CD8-positive, alpha-beta T cell (primary cell): ENCODE measurements at regions of chr5 and their contacts with region 1.

Region 1: GRCh38 chr5:141564216-141564692 is 54.5 kb downstream of the DIAPH1 start:
- DNase-seq: peak; percentile 17 to 95 (median 63)
- ATAC-seq: peak; percentile 98
- H3K4me3 ChIP-seq: no peak overlapping the region
- H3K4me3 Mint-ChIP-seq: no peak overlapping the region
- H3K27ac ChIP-seq: peak overlapping the region in 1 of 2 experiments; percentile 76
- H3K27ac Mint-ChIP-seq: peak overlapping the region; percentile 78
- H3K4me1 ChIP-seq: no peaks in the 10 kb centered on the region
- H3K4me1 Mint-ChIP-seq: peaks cover 33% of the 10 kb centered on the region
- H3K27me3 ChIP-seq: no peaks in the 10 kb centered on the region
- H3K27me3 Mint-ChIP-seq: no peaks in the 10 kb centered on the region
- CTCF ChIP-seq: peak; percentile 92

Region 2: DNA sequence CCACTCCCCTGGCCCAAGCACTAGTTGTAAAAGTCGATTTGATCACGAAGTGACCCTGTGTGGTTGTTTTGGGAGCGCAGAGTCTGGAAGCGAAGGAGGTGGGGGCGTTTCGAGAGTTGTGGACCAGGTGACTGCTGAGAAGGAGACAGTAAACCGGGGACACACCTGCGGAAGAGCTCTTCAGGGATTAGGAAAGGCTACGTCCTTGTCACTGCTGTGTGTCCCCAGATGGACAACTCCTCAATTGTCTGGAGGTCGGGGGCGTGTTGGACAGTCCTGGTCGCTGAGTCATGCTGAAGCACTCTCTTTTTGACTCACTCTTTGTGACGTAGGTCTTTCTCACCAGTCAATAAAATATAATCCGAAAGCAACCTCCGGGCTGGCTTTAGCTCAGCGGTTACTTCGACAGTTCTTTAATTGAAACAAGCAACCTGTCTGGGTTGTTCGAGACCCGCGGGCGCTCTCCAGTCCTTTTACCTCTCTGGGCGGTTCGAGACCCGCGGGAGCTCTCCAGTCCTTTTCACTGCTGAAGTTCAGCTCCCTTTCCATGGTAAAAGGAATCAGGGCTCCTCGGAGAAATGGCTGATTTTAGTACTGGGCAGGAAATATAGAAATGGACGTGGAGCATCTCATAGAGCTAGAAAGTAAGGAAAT is 853.2 kb before region 1 on chr5:
- CTCF ChIA-PET with region 1: no interaction called
- POLR2A ChIA-PET with region 1: interaction called, 3 read pairs
- intact Hi-C with region 1: loop called in 1 of 2 experiments (anchors 2 kb)
- DNase-seq: peak; percentile 66 to 95 (median 85)
- ATAC-seq: peak; percentile 83
- H3K4me3 ChIP-seq: peak overlapping the region; percentile 58 to 74
- H3K4me3 Mint-ChIP-seq: peak overlapping the region; percentile 99
- H3K27ac ChIP-seq: peak overlapping the region; percentile 72 to 86
- H3K27ac Mint-ChIP-seq: peak overlapping the region; percentile 99
- H3K4me1 ChIP-seq: no peaks in the 10 kb centered on the region
- H3K4me1 Mint-ChIP-seq: peaks cover 16% of the 10 kb centered on the region
- H3K27me3 ChIP-seq: no peaks in the 10 kb centered on the region
- H3K27me3 Mint-ChIP-seq: no peaks in the 10 kb centered on the region
- CTCF ChIP-seq: no peak

Region 3: DNA sequence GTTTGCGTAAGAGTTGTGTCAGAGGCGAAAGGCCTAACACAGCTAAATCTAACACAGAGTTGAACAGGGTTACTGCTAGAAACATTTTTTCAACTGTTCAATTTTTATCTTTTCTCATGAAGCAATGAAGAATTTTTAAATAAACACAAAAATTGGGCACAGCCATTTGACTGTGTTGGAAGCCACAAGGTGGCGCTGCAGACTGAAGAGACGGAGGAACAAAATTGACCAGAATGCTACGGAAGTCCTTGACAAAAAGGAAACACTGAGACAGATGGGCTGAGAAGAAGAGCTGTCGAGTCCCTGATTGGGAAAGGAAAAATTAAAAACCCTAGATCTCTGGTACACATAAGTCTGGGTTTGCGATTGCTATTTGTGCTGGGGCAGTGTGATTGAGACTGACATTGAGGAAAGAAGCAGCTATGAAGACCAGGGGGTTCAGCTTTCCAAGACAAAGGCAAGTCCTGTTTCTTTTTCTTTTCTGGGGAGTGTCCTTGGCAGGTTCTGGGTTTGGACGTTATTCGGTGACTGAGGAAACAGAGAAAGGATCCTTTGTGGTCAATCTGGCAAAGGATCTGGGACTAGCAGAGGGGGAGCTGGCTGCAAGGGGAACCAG is 377.2 kb before region 1 on chr5 and contains the start of gene PCDHB9:
- CTCF ChIA-PET with region 1: no interaction called
- POLR2A ChIA-PET with region 1: no interaction called
- intact Hi-C with region 1: loop called (anchors 5 to 10 kb)
- DNase-seq: peak in 2 of 9 experiments; percentile 39 to 48
- ATAC-seq: no peak
- H3K4me3 ChIP-seq: no peak within 1 kb of the TSS
- H3K4me3 Mint-ChIP-seq: peak within 1 kb of the TSS; percentile 56
- H3K27ac ChIP-seq: no peak within 1 kb of the TSS
- H3K27ac Mint-ChIP-seq: no peak within 1 kb of the TSS
- H3K4me1 ChIP-seq: no peaks in the 10 kb centered on the region
- H3K4me1 Mint-ChIP-seq: peaks cover 5% of the 10 kb centered on the region
- H3K27me3 ChIP-seq: peaks cover 0 to 11% of the 10 kb centered on the region in 2 experiments
- H3K27me3 Mint-ChIP-seq: peaks cover 65% of the 10 kb centered on the region
- CTCF ChIP-seq: peak; percentile 17
- total RNA-seq, gene PCDHB9: not detected

Region 4: DNA sequence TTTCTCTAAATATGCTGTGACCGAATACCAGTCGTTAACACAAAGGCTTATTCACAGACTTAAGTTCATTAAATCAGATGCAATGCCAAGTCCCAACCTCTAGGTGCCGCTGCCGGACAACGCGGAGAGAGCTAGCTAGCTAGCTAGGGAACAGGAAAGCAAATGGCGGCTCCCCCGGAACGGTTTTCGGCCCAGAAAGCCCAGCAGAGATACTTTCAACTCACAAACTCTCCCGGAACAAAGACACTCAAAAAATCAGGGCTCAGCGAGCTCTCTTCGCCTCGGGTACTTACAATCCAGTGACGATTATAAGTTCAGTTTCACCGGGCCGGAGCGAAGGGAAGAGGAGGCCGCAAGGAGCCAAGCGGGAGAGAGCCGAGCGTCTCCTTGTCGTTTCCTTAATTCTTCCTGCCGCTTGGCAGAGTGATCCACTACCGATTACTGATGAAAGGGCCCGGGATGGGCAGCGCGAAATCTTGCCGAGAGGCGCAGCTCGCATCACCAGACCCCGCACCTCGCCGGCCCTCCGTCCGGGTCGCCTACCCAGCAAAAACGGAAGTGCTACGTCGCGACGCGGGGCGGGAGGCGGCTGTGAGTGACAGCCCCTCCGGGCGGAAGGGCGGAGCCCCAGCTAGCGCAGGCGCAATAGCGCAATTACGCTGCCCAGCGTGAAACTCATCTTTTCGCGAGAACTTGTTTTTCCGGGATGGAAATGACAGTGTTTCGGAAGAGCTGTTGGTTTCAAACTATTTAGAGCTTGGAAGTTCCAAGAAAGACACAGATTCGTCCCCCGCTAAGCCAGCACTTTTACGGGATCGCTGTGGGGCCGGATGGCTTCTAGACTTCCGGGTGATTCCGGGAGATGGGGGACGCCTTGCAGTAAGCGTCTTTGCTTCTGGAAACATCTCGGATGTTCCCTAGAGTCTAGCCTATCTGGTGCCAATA is 243.8 kb before region 1 on chr5 and contains the start of gene TAF7:
- CTCF ChIA-PET with region 1: interaction called, 25 read pairs
- POLR2A ChIA-PET with region 1: interaction called, 18 read pairs
- intact Hi-C with region 1: loop called (anchors 1 to 2 kb)
- DNase-seq: peak; percentile 86 to 96 (median 91)
- ATAC-seq: peak; percentile 88
- H3K4me3 ChIP-seq: peak within 1 kb of the TSS; percentile 67 to 92
- H3K4me3 Mint-ChIP-seq: peak within 1 kb of the TSS; percentile 97
- H3K27ac ChIP-seq: peak within 1 kb of the TSS; percentile 90 to 99
- H3K27ac Mint-ChIP-seq: peak within 1 kb of the TSS; percentile 99
- H3K4me1 ChIP-seq: peaks cover 12% of the 10 kb centered on the region
- H3K4me1 Mint-ChIP-seq: peaks cover 28% of the 10 kb centered on the region
- H3K27me3 ChIP-seq: peaks cover 0 to 2% of the 10 kb centered on the region in 2 experiments
- H3K27me3 Mint-ChIP-seq: peaks cover 1% of the 10 kb centered on the region
- CTCF ChIP-seq: peak; percentile 94
- total RNA-seq, gene TAF7: 93.7 to 97.3 TPM

Region 5: GRCh38 chr5:141412854-141413539 is 151.3 kb before region 1 on chr5 and contains the start of gene PCDHGA10:
- CTCF ChIA-PET with region 1: interaction called, 6 read pairs
- POLR2A ChIA-PET with region 1: no interaction called
- intact Hi-C with region 1: loop called (anchors 1 to 2 kb)
- DNase-seq: peak in 8 of 9 experiments; percentile 18 to 67 (median 50)
- ATAC-seq: peak; percentile 74
- H3K4me3 ChIP-seq: peak within 1 kb of the TSS; percentile 32 to 61
- H3K4me3 Mint-ChIP-seq: peak within 1 kb of the TSS; percentile 83
- H3K27ac ChIP-seq: no peak within 1 kb of the TSS
- H3K27ac Mint-ChIP-seq: no peak within 1 kb of the TSS
- H3K4me1 ChIP-seq: peaks cover 4% of the 10 kb centered on the region
- H3K4me1 Mint-ChIP-seq: peaks cover 18% of the 10 kb centered on the region
- H3K27me3 ChIP-seq: peaks cover 26 to 27% of the 10 kb centered on the region in 2 experiments
- H3K27me3 Mint-ChIP-seq: peaks cover 70% of the 10 kb centered on the region
- CTCF ChIP-seq: peak; percentile 82
- total RNA-seq, gene PCDHGA10: 0.08 TPM in 1 of 2 experiments, not detected in the other

Region 6: GRCh38 chr5:141598391-141599350 is 34.4 kb after region 1 on chr5:
- CTCF ChIA-PET with region 1: interaction called, 17 read pairs
- POLR2A ChIA-PET with region 1: interaction called, 3 read pairs
- intact Hi-C with region 1: no loop called
- DNase-seq: peak in 1 of 9 experiments; percentile 29
- ATAC-seq: peak; percentile 44
- H3K4me3 ChIP-seq: no peak overlapping the region
- H3K4me3 Mint-ChIP-seq: peak overlapping the region; percentile 40
- H3K27ac ChIP-seq: peak overlapping the region in 1 of 2 experiments; percentile 67
- H3K27ac Mint-ChIP-seq: peak overlapping the region; percentile 78
- H3K4me1 ChIP-seq: peaks cover 69% of the 10 kb centered on the region
- H3K4me1 Mint-ChIP-seq: peaks cover 80% of the 10 kb centered on the region
- H3K27me3 ChIP-seq: no peaks in the 10 kb centered on the region
- H3K27me3 Mint-ChIP-seq: no peaks in the 10 kb centered on the region
- CTCF ChIP-seq: no peak

Region 7: DNA sequence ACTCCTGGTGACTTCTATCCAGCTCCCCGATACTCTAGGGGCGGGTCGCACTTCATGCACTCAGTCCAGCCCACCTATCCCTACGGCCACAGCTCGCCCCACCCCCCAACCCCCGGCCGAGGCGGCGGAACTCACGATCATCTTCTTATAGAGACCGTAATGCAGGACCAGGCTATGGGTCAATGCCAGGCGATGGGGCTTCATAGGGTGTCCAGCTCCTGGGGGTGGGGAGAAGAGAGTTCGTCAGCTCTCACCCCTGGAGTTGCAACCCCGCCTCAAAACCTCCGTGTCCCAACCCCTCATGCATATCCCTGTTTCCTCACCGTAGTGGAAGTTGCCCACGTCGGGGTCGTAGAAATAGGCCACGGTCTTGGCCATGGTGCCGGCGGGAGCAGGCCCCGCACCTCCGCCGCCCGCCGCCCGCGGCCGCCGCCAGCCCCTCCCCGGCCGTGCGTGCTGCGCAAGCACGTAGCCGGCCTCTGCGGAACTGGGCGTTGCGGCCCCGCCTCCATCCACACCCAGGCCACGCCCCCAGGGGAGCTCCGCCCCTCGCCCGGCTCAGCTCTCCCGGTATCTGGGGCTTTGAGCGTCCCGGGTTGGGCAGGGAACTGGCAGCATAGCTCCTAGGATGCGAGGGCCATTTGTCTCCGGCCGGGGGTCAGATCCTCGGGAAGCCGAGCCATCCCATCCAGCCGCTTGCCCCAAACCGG is 72.3 kb after region 1 on chr5 and contains the starts of genes HDAC3 and RELL2:
- CTCF ChIA-PET with region 1: interaction called, 15 read pairs
- POLR2A ChIA-PET with region 1: no interaction called
- intact Hi-C with region 1: no loop called
- DNase-seq: peak; percentile 88 to 97 (median 94)
- ATAC-seq: peak; percentile 89
- H3K4me3 ChIP-seq: peak within 1 kb of the TSS; percentile 98 to 99
- H3K4me3 Mint-ChIP-seq: peak within 1 kb of the TSS; percentile 92
- H3K27ac ChIP-seq: peak within 1 kb of the TSS; percentile 78 to 81
- H3K27ac Mint-ChIP-seq: peak within 1 kb of the TSS; percentile 89
- H3K4me1 ChIP-seq: peaks cover 28% of the 10 kb centered on the region
- H3K4me1 Mint-ChIP-seq: peaks cover 50% of the 10 kb centered on the region
- H3K27me3 ChIP-seq: no peaks in the 10 kb centered on the region
- H3K27me3 Mint-ChIP-seq: no peaks in the 10 kb centered on the region
- CTCF ChIP-seq: no peak
- total RNA-seq, gene HDAC3: 48.9 to 54.8 TPM
- total RNA-seq, gene RELL2: 9.5 to 9.8 TPM